Activated CD4-positive, alpha-beta T cell treated with anti-CD3 and anti-CD28 coated beads, Interleukin-2, amount 10 ng/mL, durations not matched to agents 24 days and 14 days (primary cell): ENCODE measurements at regions of chr1 and their contacts with region 1.

Region 1: GRCh38 chr1:92536980-92537884 is 50.5 kb upstream of the GFI1 start:
- DNase-seq: peak; percentile 87
- H3K4me3 Mint-ChIP-seq: peak overlapping the region; percentile 64
- H3K27ac Mint-ChIP-seq: peak overlapping the region; percentile 91
- H3K4me1 Mint-ChIP-seq: peaks cover 72% of the 10 kb centered on the region
- H3K27me3 Mint-ChIP-seq: no peaks in the 10 kb centered on the region

Region 2: GRCh38 chr1:91791103-91791502 is 746.1 kb before region 1 on chr1:
- intact Hi-C with region 1: no loop called
- DNase-seq: no peak
- H3K4me3 Mint-ChIP-seq: no peak overlapping the region
- H3K27ac Mint-ChIP-seq: no peak overlapping the region
- H3K4me1 Mint-ChIP-seq: peaks cover 30% of the 10 kb centered on the region
- H3K27me3 Mint-ChIP-seq: peaks cover 2% of the 10 kb centered on the region

Region 3: GRCh38 chr1:92310185-92310597 is 227.0 kb before region 1 on chr1:
- intact Hi-C with region 1: loop called (anchors 1 kb)
- DNase-seq: no peak
- H3K4me3 Mint-ChIP-seq: no peak overlapping the region
- H3K27ac Mint-ChIP-seq: no peak overlapping the region
- H3K4me1 Mint-ChIP-seq: peaks cover 34% of the 10 kb centered on the region
- H3K27me3 Mint-ChIP-seq: no peaks in the 10 kb centered on the region

Region 4: GRCh38 chr1:92411511-92411910 is 125.7 kb before region 1 on chr1:
- intact Hi-C with region 1: no loop called
- DNase-seq: no peak
- H3K4me3 Mint-ChIP-seq: peak overlapping the region; percentile 29
- H3K27ac Mint-ChIP-seq: peak overlapping the region; percentile 58
- H3K4me1 Mint-ChIP-seq: peaks cover 39% of the 10 kb centered on the region
- H3K27me3 Mint-ChIP-seq: no peaks in the 10 kb centered on the region

Region 5: GRCh38 chr1:92473781-92474495 is 63.3 kb before region 1 on chr1:
- intact Hi-C with region 1: loop called (anchors 1 kb)
- DNase-seq: peak; percentile 80
- H3K4me3 Mint-ChIP-seq: peak overlapping the region; percentile 48
- H3K27ac Mint-ChIP-seq: peak overlapping the region; percentile 89
- H3K4me1 Mint-ChIP-seq: peaks cover 67% of the 10 kb centered on the region
- H3K27me3 Mint-ChIP-seq: no peaks in the 10 kb centered on the region

Region 6: DNA sequence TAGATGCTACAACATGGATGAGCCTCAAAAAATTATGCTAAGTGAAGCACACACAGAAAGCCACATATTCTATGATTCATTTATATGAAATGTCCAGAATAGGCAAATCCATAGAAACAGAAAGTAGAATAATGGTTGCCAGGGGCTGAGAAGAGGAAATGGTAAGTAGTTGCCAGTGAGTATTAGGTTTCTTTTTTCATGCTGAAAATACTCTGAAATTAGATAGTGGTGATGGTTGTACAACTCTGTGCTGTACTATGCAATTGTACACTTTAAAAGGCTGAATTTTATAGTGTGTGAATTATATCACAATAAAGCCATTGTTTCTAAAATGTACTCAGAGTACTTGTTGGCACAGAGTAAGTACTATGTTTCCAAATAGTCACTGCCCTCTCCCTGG is 35.0 kb before region 1 on chr1:
- intact Hi-C with region 1: loop called (anchors 1 kb)
- DNase-seq: no peak
- H3K4me3 Mint-ChIP-seq: no peak overlapping the region
- H3K27ac Mint-ChIP-seq: peak overlapping the region; percentile 57
- H3K4me1 Mint-ChIP-seq: peaks cover 32% of the 10 kb centered on the region
- H3K27me3 Mint-ChIP-seq: no peaks in the 10 kb centered on the region

Region 7: GRCh38 chr1:92577261-92577895 is 40.1 kb after region 1 on chr1:
- intact Hi-C with region 1: loop called (anchors 2 kb)
- DNase-seq: peak; percentile 72
- H3K4me3 Mint-ChIP-seq: peak overlapping the region; percentile 96
- H3K27ac Mint-ChIP-seq: peak overlapping the region; percentile 96
- H3K4me1 Mint-ChIP-seq: peaks cover 57% of the 10 kb centered on the region
- H3K27me3 Mint-ChIP-seq: no peaks in the 10 kb centered on the region

Region 8: DNA sequence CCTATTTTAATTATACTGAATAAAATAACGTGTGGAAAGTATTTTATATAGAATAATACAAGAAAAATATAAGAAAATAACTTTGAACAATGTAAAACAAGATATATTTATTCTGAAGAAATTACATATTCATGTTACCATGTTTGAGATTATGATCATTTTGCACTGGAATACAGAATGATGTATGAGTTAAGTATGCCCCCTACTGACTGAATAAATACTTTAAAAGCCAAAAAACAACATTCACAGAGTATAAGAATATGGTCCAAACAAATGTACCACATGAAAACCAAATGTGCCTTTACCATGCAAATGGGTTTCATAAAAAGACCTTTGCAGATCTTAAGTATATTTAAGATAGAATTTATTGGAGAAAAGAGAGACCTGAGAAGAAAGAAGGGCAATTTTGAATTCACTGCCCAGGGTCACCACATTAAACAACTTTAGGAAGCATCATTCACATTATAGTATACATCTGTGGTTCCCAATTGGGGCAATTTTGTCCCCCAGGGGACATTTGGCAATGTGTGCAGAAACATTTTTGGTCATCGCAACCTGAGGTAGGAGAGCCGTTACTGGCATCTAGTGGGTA is 86.1 kb after region 1 on chr1:
- intact Hi-C with region 1: no loop called
- DNase-seq: peak; percentile 49
- H3K4me3 Mint-ChIP-seq: no peak overlapping the region
- H3K27ac Mint-ChIP-seq: no peak overlapping the region
- H3K4me1 Mint-ChIP-seq: no peaks in the 10 kb centered on the region
- H3K27me3 Mint-ChIP-seq: peaks cover 13% of the 10 kb centered on the region

Region 9: GRCh38 chr1:92975551-92976232 is 438.5 kb after region 1 on chr1:
- intact Hi-C with region 1: loop called (anchors 5 kb)
- DNase-seq: peak; percentile 59
- H3K4me3 Mint-ChIP-seq: peak overlapping the region; percentile 6
- H3K27ac Mint-ChIP-seq: peak overlapping the region; percentile 79
- H3K4me1 Mint-ChIP-seq: peaks cover 60% of the 10 kb centered on the region
- H3K27me3 Mint-ChIP-seq: no peaks in the 10 kb centered on the region